ENCODE measurements at regions of chr11 and their contacts with region 1.

Region 1: GRCh38 chr11:21564833-21565682 is 627.8 kb upstream of the ANO5 start:
- DNase-seq: no peak
- H3K4me3 Mint-ChIP-seq: no peak overlapping the region
- H3K27ac Mint-ChIP-seq: no peak overlapping the region
- H3K4me1 Mint-ChIP-seq: peaks cover 61% of the 10 kb centered on the region
- H3K27me3 Mint-ChIP-seq: no peaks in the 10 kb centered on the region
- CTCF ChIP-seq: no peak

Region 2: DNA sequence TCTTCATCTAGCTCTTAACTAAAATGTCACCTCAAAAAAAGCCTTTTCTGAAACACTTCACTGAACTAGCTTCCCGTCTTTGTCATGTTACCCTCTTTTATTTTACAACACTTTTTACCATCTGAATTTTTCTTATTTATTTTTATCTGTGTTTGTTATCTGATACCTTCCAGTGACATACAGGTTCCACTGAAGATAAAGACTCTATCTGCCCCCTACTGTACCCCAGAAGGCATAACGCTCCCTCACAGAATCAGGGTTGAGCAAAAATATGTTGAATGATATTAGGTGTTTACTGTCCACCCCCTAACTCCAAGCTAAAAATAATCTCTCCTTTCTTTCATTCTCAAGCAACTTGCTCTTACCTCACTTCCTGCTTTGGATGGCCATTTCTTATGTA is 241.4 kb before region 1 on chr11:
- CTCF ChIA-PET with region 1: no interaction called
- intact Hi-C with region 1: no loop called
- DNase-seq: no peak
- H3K4me3 Mint-ChIP-seq: no peak overlapping the region
- H3K27ac Mint-ChIP-seq: no peak overlapping the region
- H3K4me1 Mint-ChIP-seq: no peaks in the 10 kb centered on the region
- H3K27me3 Mint-ChIP-seq: no peaks in the 10 kb centered on the region
- CTCF ChIP-seq: no peak

Region 3: GRCh38 chr11:21511835-21512440 is 53.1 kb before region 1 on chr11:
- CTCF ChIA-PET with region 1: interaction called, 3 read pairs
- intact Hi-C with region 1: loop called (anchors 1 kb)
- DNase-seq: peak; percentile 83
- H3K4me3 Mint-ChIP-seq: no peak overlapping the region
- H3K27ac Mint-ChIP-seq: no peak overlapping the region
- H3K4me1 Mint-ChIP-seq: no peaks in the 10 kb centered on the region
- H3K27me3 Mint-ChIP-seq: no peaks in the 10 kb centered on the region
- CTCF ChIP-seq: peak; percentile 66

Region 4: GRCh38 chr11:21552911-21553310 is 12.1 kb before region 1 on chr11:
- CTCF ChIA-PET with region 1: interaction called, 13 read pairs
- intact Hi-C with region 1: no loop called
- DNase-seq: no peak
- H3K4me3 Mint-ChIP-seq: no peak overlapping the region
- H3K27ac Mint-ChIP-seq: peak overlapping the region; percentile 6
- H3K4me1 Mint-ChIP-seq: peaks cover 24% of the 10 kb centered on the region
- H3K27me3 Mint-ChIP-seq: no peaks in the 10 kb centered on the region
- CTCF ChIP-seq: no peak

Region 5: DNA sequence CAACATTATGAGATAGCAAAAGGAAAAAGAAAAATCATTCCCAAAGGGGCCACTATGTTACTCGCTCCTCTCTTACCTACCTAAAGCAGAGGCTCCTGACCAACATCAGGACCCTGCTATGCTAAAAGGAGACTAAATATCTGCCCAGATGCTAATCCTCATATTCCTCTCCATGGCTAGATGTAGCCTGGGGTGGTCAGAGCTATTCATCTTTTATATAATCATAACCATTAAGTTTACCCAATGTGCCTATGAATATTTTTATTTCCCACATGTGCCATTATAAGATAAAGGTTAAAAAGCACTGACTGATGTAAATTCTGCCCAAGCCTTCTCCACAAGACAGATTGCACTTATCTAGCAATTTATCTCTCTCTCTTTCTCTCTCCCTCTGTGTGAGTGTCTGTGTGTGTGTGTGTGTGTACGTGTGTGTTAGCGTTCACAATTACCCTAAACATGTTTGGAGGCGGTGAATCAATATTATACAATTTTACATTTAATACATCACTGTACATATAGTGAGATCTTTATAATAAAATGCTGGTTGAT is 586.7 kb after region 1 on chr11:
- CTCF ChIA-PET with region 1: interaction called, 3 read pairs
- intact Hi-C with region 1: loop called (anchors 5 kb)
- DNase-seq: no peak
- H3K4me3 Mint-ChIP-seq: no peak overlapping the region
- H3K27ac Mint-ChIP-seq: no peak overlapping the region
- H3K4me1 Mint-ChIP-seq: peaks cover 8% of the 10 kb centered on the region
- H3K27me3 Mint-ChIP-seq: peaks cover 31% of the 10 kb centered on the region
- CTCF ChIP-seq: no peak

Measured in Calu3 (cell line).